ENCODE measurements at regions of chr5 and their contacts with region 1.

Region 1: GRCh38 chr5:73201547-73202513 is 28.8 kb downstream of the TMEM174 start:
- DNase-seq: peak; percentile 83 to 90
- ATAC-seq: peak; percentile 85
- H3K4me3 ChIP-seq: no peak overlapping the region
- H3K27ac ChIP-seq: no peak overlapping the region
- H3K4me1 ChIP-seq: no peaks in the 10 kb centered on the region
- H3K27me3 ChIP-seq: no peaks in the 10 kb centered on the region

Region 2: GRCh38 chr5:73081093-73081492 is 120.7 kb before region 1 on chr5:
- intact Hi-C with region 1: loop called (anchors 5 kb)
- DNase-seq: no peak
- ATAC-seq: no peak
- H3K4me3 ChIP-seq: no peak overlapping the region
- H3K27ac ChIP-seq: no peak overlapping the region
- H3K4me1 ChIP-seq: no peaks in the 10 kb centered on the region
- H3K27me3 ChIP-seq: no peaks in the 10 kb centered on the region

Region 3: GRCh38 chr5:73298772-73299630 is 97.2 kb after region 1 on chr5:
- intact Hi-C with region 1: no loop called
- DNase-seq: peak in 1 of 2 donors; percentile 79
- ATAC-seq: peak; percentile 55
- H3K4me3 ChIP-seq: peak overlapping the region in 1 of 2 donors; percentile 5
- H3K27ac ChIP-seq: no peak overlapping the region
- H3K4me1 ChIP-seq: no peaks in the 10 kb centered on the region
- H3K27me3 ChIP-seq: no peaks in the 10 kb centered on the region